Upper lobe of right lung (tissue), 1 donor: ENCODE measurements at regions of chr1 and their contacts with region 1.

Region 1: GRCh38 chr1:40153073-40153770 is 8.0 kb upstream of the RLF start:
- DNase-seq: no peak
- ATAC-seq: peak; percentile 64
- H3K4me3 ChIP-seq: no peak overlapping the region
- H3K27ac ChIP-seq: no peak overlapping the region
- H3K4me1 ChIP-seq: no peaks in the 10 kb centered on the region
- H3K27me3 ChIP-seq: no peaks in the 10 kb centered on the region
- CTCF ChIP-seq: peak; percentile 71

Region 2: DNA sequence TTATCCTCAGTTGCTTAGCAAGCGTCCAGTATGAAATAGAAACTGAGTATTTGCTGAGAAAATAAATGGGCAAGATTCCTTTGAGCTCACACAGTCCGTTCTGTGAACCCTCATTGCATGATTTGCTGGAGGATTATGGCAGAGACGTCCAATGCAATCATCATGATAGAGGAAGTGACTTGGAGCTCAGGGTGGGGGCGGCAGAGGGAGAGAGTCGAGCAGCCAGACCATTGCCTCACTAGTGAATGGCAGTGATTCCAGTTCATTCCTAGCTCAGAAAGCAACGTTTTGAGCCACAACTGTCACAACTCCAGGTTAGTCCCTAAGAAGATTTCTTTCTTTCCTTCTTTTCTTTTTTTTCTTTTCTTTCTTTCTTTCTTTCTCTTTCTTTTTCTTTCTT is 191.4 kb after region 1 on chr1:
- intact Hi-C with region 1: loop called (anchors 5 kb)
- DNase-seq: peak; percentile 77
- ATAC-seq: peak; percentile 93
- H3K4me3 ChIP-seq: no peak overlapping the region
- H3K27ac ChIP-seq: no peak overlapping the region
- H3K4me1 ChIP-seq: no peaks in the 10 kb centered on the region
- H3K27me3 ChIP-seq: no peaks in the 10 kb centered on the region
- CTCF ChIP-seq: no peak